ENCODE measurements at regions of chr10 and their contacts with region 1.

Region 1: DNA sequence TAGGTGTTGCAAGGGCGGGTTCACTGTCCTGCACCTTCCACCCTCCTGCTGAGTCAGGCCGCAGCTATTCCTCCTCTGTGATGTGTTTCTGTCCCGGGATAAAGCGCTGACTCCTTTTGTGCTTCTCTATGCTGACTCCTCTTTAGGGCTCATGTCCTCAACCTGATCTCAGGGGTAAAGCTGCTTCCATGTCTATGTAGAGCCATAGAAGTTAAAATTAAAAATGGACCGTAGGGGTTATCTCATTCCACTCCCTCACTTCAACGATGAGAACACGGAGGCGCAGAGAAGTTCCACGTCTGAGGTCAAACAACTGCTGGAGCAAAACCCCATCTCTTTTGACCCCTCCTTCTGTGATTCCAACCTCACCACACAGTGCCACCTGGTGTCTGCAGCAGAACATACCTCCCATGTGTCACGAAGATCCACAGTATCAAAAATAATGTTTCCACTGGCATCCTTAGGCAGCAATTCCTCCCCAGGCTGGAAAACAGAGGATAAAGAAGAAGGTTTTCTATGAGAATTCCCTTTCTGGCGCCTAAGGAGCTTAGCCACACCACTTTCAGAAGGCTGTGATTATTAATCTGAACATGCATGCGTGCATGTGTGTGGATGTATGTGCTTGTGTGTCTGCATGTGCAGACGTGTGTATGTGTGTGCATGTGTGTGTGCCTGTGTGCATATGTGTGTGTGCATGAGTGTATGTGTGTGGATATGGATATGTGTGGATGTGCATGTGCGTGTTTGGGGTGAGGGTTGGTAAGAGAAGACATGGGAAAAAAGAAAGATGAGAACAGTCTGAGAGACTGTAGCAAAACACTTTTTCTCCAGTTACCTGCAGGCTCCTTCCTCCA is 81.2 kb upstream of the UCN3 start:
- DNase-seq: peak; percentile 58
- ATAC-seq: peak; percentile 89
- H3K4me3 ChIP-seq: no peak overlapping the region
- H3K27ac ChIP-seq: no peak overlapping the region
- H3K4me1 ChIP-seq: peaks cover 17% of the 10 kb centered on the region
- H3K27me3 ChIP-seq: no peaks in the 10 kb centered on the region
- CTCF ChIP-seq: peak; percentile 82
- EP300 ChIP-seq: 0 out of 4 replicates have a peak, but pooled peaks of 1 of the 2 experiments have one; percentile 21
- POLR2A ChIP-seq: no peak
- RAD21 ChIP-seq: peak; percentile 86

Region 2: DNA sequence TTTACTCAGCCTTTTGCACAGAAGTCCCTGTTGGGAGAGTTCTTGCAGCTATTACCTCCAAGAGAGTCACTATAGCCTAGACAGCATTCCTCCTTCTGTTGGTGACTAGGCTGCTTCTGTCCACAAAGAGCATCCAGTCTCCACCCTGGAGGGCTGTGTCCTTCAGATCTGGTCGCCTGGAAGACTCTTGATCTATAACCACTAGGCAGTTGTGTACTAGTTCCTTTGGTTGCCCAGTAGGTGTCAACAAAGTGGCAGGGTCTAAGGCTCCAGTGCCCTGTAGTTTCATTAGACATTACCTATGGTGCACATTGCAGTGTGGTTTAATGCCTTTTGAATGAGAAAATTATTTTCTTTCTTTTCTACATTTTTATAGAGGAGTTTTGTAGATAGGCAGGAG is 268.6 kb before region 1 on chr10:
- CTCF ChIA-PET with region 1: no interaction called
- POLR2A ChIA-PET with region 1: no interaction called
- in situ Hi-C with region 1: loop called (anchors 10 kb)
- intact Hi-C with region 1: loop called (anchors 10 kb)
- DNase-seq: peak; percentile 29
- ATAC-seq: peak; percentile 75
- H3K4me3 ChIP-seq: no peak overlapping the region
- H3K27ac ChIP-seq: no peak overlapping the region
- H3K4me1 ChIP-seq: peaks cover 52% of the 10 kb centered on the region
- H3K27me3 ChIP-seq: no peaks in the 10 kb centered on the region
- CTCF ChIP-seq: peak; percentile 59
- EP300 ChIP-seq: no peak
- POLR2A ChIP-seq: no peak
- RAD21 ChIP-seq: peak; percentile 44; the same call in 1 of the 2 replicates

Region 3: GRCh38 chr10:5023177-5023805 is 260.2 kb before region 1 on chr10:
- CTCF ChIA-PET with region 1: no interaction called
- POLR2A ChIA-PET with region 1: no interaction called
- in situ Hi-C with region 1: loop called (anchors 10 kb)
- intact Hi-C with region 1: loop called (anchors 10 kb)
- DNase-seq: no peak
- ATAC-seq: no peak
- H3K4me3 ChIP-seq: no peak overlapping the region
- H3K27ac ChIP-seq: no peak overlapping the region
- H3K4me1 ChIP-seq: peaks cover 47% of the 10 kb centered on the region
- H3K27me3 ChIP-seq: no peaks in the 10 kb centered on the region
- CTCF ChIP-seq: no peak
- EP300 ChIP-seq: no peak
- POLR2A ChIP-seq: no peak
- RAD21 ChIP-seq: no peak

Measured in HepG2 (cell line).